Sigmoid colon (tissue), 7 donors: ENCODE measurements at regions of chr2 and their contacts with region 1.

Region 1: DNA sequence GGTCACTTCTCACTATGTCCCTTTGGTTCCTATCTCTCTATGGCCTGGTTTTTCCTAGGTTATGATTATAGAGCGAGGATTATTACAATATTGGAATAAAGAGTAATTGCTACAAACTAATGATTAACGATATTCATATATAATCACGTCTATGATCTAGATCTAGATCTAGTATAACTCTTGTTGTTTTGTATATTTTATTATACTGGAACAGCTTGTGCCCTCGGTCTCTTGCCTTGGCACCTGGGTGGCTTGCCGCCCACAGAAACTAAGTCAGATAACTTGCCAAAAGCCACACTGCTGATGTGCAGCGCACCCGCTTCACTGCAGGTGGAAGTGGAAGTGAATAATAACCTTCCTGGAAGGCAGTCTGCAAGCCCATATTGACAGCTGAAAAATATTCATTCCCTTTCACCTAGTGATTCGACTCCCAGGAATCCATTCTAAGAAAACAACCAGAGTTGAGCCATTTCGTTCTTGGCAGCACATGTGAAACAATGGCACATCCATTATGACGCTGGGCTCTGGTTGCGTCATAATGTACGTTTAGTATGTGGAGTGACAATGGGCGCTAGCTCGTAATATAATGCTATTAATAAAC is 725 bp upstream of the ANKRD53 start:
- DNase-seq: peak; percentile 81
- H3K4me3 ChIP-seq: peak overlapping the region; percentile 53 to 69 (median 62)
- H3K27ac ChIP-seq: peak overlapping the region; percentile 83 to 94 (median 88)
- H3K4me1 ChIP-seq: peaks cover 0 to 25% (median 22%) of the 10 kb centered on the region in 4 donors
- H3K27me3 ChIP-seq: no peaks in the 10 kb centered on the region
- CTCF ChIP-seq: no peak
- EP300 ChIP-seq: no peak
- POLR2A ChIP-seq: no peak

Region 2: DNA sequence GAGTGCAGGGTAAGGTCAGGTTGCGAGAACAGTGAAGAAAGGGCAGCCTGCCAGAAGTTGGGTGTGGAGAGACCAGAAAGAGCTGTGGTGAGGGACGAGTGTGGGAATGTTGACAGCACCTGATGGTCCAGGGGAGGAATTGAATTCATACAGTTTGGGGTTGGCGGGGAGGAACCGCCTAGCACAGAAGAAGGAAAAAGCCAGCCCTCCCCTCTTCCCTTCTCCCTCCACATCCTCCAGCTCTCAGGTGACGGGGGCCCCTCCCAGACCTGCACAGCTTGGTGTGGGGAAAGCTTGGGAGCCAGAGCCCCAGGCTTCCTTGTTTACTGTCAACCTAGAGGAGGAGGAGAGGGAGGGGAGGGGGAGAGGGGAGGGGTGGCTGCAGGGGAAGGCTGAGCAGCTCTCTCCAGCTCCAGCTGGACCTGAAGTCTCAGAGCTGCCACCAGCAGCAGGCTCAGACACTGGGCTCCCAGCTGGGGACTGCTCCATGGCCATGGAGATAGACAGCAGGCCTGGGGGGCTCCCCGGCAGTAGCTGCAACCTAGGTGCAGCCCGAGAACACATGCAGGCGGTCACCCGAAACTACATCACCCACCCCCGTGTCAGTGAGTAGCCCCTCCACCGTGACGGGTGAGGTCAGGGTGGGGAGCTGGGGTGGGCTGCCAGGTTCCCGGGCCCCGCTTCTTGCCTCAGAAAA is 42.1 kb before region 1 on chr2 and contains the start of gene ATP6V1B1:
- intact Hi-C with region 1: no loop called
- DNase-seq: peak; percentile 46
- H3K4me3 ChIP-seq: no peak within 1 kb of the TSS
- H3K27ac ChIP-seq: no peak within 1 kb of the TSS
- H3K4me1 ChIP-seq: no peaks in the 10 kb centered on the region
- H3K27me3 ChIP-seq: peaks cover 0 to 48% (median 7%) of the 10 kb centered on the region in 3 donors
- CTCF ChIP-seq: no peak
- EP300 ChIP-seq: no peak
- POLR2A ChIP-seq: no peak
- total RNA-seq, gene ATP6V1B1: 0.66 to 1.9 TPM in 2 of 4 donors, not detected in the others

Region 3: DNA sequence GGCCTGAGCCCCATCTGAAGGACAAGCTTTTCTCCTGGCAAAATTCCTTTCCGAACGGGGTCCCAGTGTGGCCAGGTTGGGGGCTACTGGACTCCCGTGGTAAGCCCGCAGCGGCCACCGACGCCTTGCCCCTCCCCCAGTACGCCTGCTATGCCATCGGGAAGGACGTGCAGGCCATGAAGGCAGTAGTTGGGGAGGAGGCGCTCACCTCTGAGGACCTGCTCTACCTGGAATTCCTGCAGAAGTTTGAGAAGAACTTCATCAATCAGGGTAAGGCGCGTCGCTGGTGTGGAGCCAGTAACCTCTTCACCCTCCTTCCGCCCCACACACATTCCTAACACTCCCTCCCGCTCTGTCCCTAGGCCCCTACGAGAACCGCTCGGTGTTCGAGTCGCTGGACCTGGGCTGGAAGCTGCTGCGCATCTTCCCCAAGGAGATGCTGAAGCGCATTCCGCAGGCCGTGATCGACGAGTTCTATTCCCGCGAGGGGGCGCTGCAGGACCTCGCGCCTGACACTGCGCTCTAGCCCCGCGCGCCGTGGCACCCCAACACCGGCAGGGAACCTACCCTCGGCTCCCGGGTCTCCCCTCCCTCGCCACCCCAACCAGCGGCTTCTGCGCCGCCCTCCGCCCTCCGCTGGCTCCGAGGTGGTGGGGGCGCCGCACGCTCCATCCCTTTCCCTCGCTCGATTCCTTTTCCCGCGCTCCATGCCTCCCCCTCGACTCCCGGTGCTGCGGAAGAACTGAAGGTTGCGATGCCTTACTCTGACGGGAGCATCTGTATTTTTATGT is 12.9 kb before region 1 on chr2:
- intact Hi-C with region 1: loop called (anchors 2 kb)
- DNase-seq: peak; percentile 88
- H3K4me3 ChIP-seq: peak overlapping the region; percentile 28 to 53 (median 47)
- H3K27ac ChIP-seq: no peak overlapping the region
- H3K4me1 ChIP-seq: peaks cover 0 to 11% (median 8%) of the 10 kb centered on the region in 4 donors
- H3K27me3 ChIP-seq: peaks cover 0 to 53% (median 15%) of the 10 kb centered on the region in 3 donors
- CTCF ChIP-seq: peak; percentile 68 to 88 (median 78)
- EP300 ChIP-seq: no peak
- POLR2A ChIP-seq: no peak

Region 4: GRCh38 chr2:70994756-70995729 is 17.3 kb after region 1 on chr2 and contains the start of gene TEX261:
- intact Hi-C with region 1: loop called (anchors 2 kb)
- DNase-seq: peak; percentile 93
- H3K4me3 ChIP-seq: peak within 1 kb of the TSS; percentile 97 to 99 (median 98)
- H3K27ac ChIP-seq: peak within 1 kb of the TSS; percentile 82 to 87 (median 84)
- H3K4me1 ChIP-seq: peaks cover 0 to 33% (median 26%) of the 10 kb centered on the region in 4 donors
- H3K27me3 ChIP-seq: no peaks in the 10 kb centered on the region
- CTCF ChIP-seq: peak; percentile 8 to 69 (median 34)
- EP300 ChIP-seq: no peak
- POLR2A ChIP-seq: no peak
- total RNA-seq, gene TEX261: 19.5 to 26.5 (median 22.8) TPM

Region 5: GRCh38 chr2:71068218-71069035 is 90.7 kb after region 1 on chr2 and contains the start of gene NAGK:
- intact Hi-C with region 1: loop called (anchors 5 kb)
- DNase-seq: peak; percentile 99
- H3K4me3 ChIP-seq: peak within 1 kb of the TSS; percentile 79 to 89 (median 80)
- H3K27ac ChIP-seq: peak within 1 kb of the TSS; percentile 92 to 96 (median 94)
- H3K4me1 ChIP-seq: peaks cover 0 to 38% (median 34%) of the 10 kb centered on the region in 4 donors
- H3K27me3 ChIP-seq: no peaks in the 10 kb centered on the region
- CTCF ChIP-seq: no peak
- EP300 ChIP-seq: peak in 2 of 4 donors; percentile 14 to 82
- POLR2A ChIP-seq: peak; percentile 100
- total RNA-seq, gene NAGK: 36.3 to 73.2 (median 64.2) TPM

Region 6: GRCh38 chr2:71130113-71130904 is 152.6 kb after region 1 on chr2 and contains the starts of genes MCEE and MPHOSPH10:
- intact Hi-C with region 1: loop called (anchors 5 kb)
- DNase-seq: peak; percentile 94
- H3K4me3 ChIP-seq: peak within 1 kb of the TSS; percentile 68 to 87 (median 80)
- H3K27ac ChIP-seq: peak within 1 kb of the TSS; percentile 88 to 95 (median 92)
- H3K4me1 ChIP-seq: peaks cover 0 to 37% (median 29%) of the 10 kb centered on the region in 4 donors
- H3K27me3 ChIP-seq: no peaks in the 10 kb centered on the region
- CTCF ChIP-seq: no peak
- EP300 ChIP-seq: no peak
- POLR2A ChIP-seq: peak; percentile 29 to 52
- total RNA-seq, gene MCEE: 8.1 to 23.5 (median 15.5) TPM
- total RNA-seq, gene MPHOSPH10: 21.0 to 27.1 (median 24.0) TPM